GM12878 (cell line): ENCODE measurements at regions of chr3 and their contacts with region 1.

Region 1: GRCh38 chr3:28328188-28329151 is 20.1 kb upstream of the ZCWPW2 start:
- DNase-seq: no peak
- ATAC-seq: peak; percentile 32; the same call in 2 of the 3 replicates
- H3K4me3 ChIP-seq: no peak overlapping the region
- H3K27ac ChIP-seq: no peak overlapping the region
- H3K4me1 ChIP-seq: no peaks in the 10 kb centered on the region
- H3K27me3 ChIP-seq: no peaks in the 10 kb centered on the region
- CTCF ChIP-seq: peak in 2 of 3 experiments; percentile 28 to 60; a peak in 4 of 6 replicates
- EP300 ChIP-seq: no peak
- POLR2A ChIP-seq: no peak
- RAD21 ChIP-seq: peak; percentile 49

Region 2: DNA sequence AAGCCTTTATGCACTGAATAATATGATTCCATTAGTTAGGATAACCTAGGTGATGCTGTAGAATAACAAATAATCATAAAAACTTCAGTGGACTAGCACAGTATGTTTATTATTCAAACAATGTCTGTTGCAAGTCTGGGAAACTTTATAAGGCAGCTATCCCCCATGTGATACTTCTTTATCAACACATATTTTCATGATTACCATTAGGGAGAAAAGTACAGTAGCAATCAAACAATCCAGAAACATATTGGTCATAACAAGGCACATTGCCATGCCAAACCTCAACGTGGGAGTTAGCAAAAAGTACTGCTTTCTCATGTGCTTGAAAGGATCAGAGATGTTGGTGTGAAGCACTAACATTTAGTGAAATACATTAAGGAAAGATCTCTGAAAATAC is 641.8 kb before region 1 on chr3:
- CTCF ChIA-PET with region 1: interaction called, 24 read pairs
- POLR2A ChIA-PET with region 1: interaction called, 3 read pairs
- RAD21 ChIA-PET with region 1: interaction called, 6 read pairs
- SMC1A ChIA-PET with region 1: interaction called, 20 read pairs
- in situ Hi-C with region 1: no loop called
- intact Hi-C with region 1: no loop called
- DNase-seq: no peak
- ATAC-seq: no peak
- H3K4me3 ChIP-seq: no peak overlapping the region
- H3K27ac ChIP-seq: no peak overlapping the region
- H3K4me1 ChIP-seq: no peaks in the 10 kb centered on the region
- H3K27me3 ChIP-seq: no peaks in the 10 kb centered on the region; a peak in 1 of 4 replicates
- CTCF ChIP-seq: no peak
- EP300 ChIP-seq: no peak
- POLR2A ChIP-seq: no peak
- RAD21 ChIP-seq: no peak

Region 3: GRCh38 chr3:28022916-28023315 is 305.6 kb before region 1 on chr3:
- CTCF ChIA-PET with region 1: interaction called, 8 read pairs
- POLR2A ChIA-PET with region 1: no interaction called
- RAD21 ChIA-PET with region 1: interaction called, 14 read pairs
- SMC1A ChIA-PET with region 1: interaction called, 5 read pairs
- in situ Hi-C with region 1: no loop called
- intact Hi-C with region 1: no loop called
- DNase-seq: no peak
- ATAC-seq: 0 out of 3 replicates have a peak, but pooled peaks have one; percentile 8
- H3K4me3 ChIP-seq: no peak overlapping the region
- H3K27ac ChIP-seq: no peak overlapping the region
- H3K4me1 ChIP-seq: no peaks in the 10 kb centered on the region; the same call in 1 of the 2 replicates
- H3K27me3 ChIP-seq: no peaks in the 10 kb centered on the region
- CTCF ChIP-seq: no peak
- EP300 ChIP-seq: no peak
- POLR2A ChIP-seq: no peak
- RAD21 ChIP-seq: no peak

Region 4: GRCh38 chr3:28134792-28135375 is 193.6 kb before region 1 on chr3:
- CTCF ChIA-PET with region 1: interaction called, 3 read pairs
- POLR2A ChIA-PET with region 1: interaction called, 3 read pairs
- RAD21 ChIA-PET with region 1: interaction called, 44 read pairs
- SMC1A ChIA-PET with region 1: interaction called, 14 read pairs
- in situ Hi-C with region 1: no loop called
- intact Hi-C with region 1: no loop called
- DNase-seq: no peak
- ATAC-seq: peak; percentile 16
- H3K4me3 ChIP-seq: no peak overlapping the region
- H3K27ac ChIP-seq: no peak overlapping the region
- H3K4me1 ChIP-seq: no peaks in the 10 kb centered on the region
- H3K27me3 ChIP-seq: no peaks in the 10 kb centered on the region
- CTCF ChIP-seq: no peak
- EP300 ChIP-seq: no peak
- POLR2A ChIP-seq: no peak
- RAD21 ChIP-seq: no peak

Region 5: DNA sequence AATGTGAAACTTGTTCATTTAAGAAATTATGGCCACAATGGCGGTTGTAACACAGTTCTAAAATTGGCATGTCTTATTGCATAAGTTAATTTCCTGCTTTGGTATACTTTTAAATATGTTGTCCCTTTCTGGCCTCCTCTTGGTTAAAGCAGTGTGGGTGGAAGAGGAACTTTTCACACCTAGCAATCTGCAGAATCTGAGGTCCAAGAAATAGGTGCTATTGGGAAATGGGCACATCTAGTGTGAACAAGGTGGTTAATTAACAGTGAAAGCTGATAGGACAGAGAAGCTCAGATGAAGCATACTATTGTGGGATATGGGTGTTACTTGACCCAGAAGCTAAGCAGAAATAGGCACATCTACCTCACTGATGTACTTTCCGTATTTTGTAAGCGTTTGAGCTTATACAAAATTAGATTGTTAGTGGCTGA is 76.5 kb before region 1 on chr3:
- CTCF ChIA-PET with region 1: interaction called, 3 read pairs
- POLR2A ChIA-PET with region 1: interaction called, 5 read pairs
- RAD21 ChIA-PET with region 1: interaction called, 11 read pairs
- SMC1A ChIA-PET with region 1: interaction called, 17 read pairs
- in situ Hi-C with region 1: no loop called
- intact Hi-C with region 1: no loop called
- DNase-seq: no peak
- ATAC-seq: peak; percentile 86
- H3K4me3 ChIP-seq: no peak overlapping the region
- H3K27ac ChIP-seq: no peak overlapping the region
- H3K4me1 ChIP-seq: no peaks in the 10 kb centered on the region; the same call in 1 of the 2 replicates
- H3K27me3 ChIP-seq: no peaks in the 10 kb centered on the region
- CTCF ChIP-seq: no peak
- EP300 ChIP-seq: peak in 1 of 2 experiments; percentile 46; a peak in 2 of 4 replicates
- POLR2A ChIP-seq: no peak
- RAD21 ChIP-seq: no peak

Region 6: DNA sequence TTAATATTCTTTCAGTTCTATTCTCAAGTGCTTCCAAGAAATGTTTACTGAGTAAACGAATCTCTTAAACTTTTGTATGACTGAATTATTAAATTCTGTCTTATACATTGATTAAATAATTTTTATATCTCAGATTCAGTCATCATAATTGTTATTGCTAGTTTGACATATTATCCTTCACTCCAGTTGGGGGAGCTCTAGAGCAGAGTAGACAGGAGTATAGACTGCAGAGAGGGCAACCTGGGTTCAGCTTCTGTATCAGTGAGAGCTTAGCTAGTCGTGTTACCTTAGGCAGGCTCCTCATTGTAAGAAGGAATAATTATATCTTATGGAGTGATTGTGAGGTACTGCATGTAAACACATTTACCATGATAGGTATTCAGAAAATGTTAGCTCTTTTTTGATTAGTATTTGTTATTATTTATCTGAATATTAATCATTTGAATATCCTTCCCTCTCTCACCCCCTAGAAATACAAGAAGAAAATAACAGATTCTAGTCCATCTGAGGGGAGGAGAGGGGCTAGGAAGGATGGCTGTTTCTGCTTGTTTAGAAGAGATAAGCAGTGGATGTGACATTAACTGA is 10.9 kb before region 1 on chr3:
- CTCF ChIA-PET with region 1: interaction called, 56 read pairs
- POLR2A ChIA-PET with region 1: no interaction called
- RAD21 ChIA-PET with region 1: interaction called, 45 read pairs
- SMC1A ChIA-PET with region 1: interaction called, 54 read pairs
- in situ Hi-C with region 1: no loop called
- intact Hi-C with region 1: no loop called
- DNase-seq: no peak
- ATAC-seq: peak; percentile 96
- H3K4me3 ChIP-seq: no peak overlapping the region
- H3K27ac ChIP-seq: no peak overlapping the region
- H3K4me1 ChIP-seq: no peaks in the 10 kb centered on the region
- H3K27me3 ChIP-seq: no peaks in the 10 kb centered on the region
- CTCF ChIP-seq: peak; percentile 58 to 61 (median 59); a peak in 5 of 6 replicates
- EP300 ChIP-seq: no peak
- POLR2A ChIP-seq: no peak
- RAD21 ChIP-seq: peak; percentile 43; the same call in 1 of the 2 replicates

Region 7: GRCh38 chr3:28388978-28389377 is 60.5 kb after region 1 on chr3:
- CTCF ChIA-PET with region 1: no interaction called
- POLR2A ChIA-PET with region 1: no interaction called
- RAD21 ChIA-PET with region 1: no interaction called
- SMC1A ChIA-PET with region 1: no interaction called
- in situ Hi-C with region 1: no loop called
- intact Hi-C with region 1: no loop called
- DNase-seq: no peak
- ATAC-seq: no peak
- H3K4me3 ChIP-seq: no peak overlapping the region
- H3K27ac ChIP-seq: no peak overlapping the region
- H3K4me1 ChIP-seq: no peaks in the 10 kb centered on the region
- H3K27me3 ChIP-seq: no peaks in the 10 kb centered on the region
- CTCF ChIP-seq: no peak
- EP300 ChIP-seq: no peak
- POLR2A ChIP-seq: no peak
- RAD21 ChIP-seq: no peak